CD14-positive monocyte (primary cell): ENCODE measurements at regions of chr12 and their contacts with region 1.

Region 1: DNA sequence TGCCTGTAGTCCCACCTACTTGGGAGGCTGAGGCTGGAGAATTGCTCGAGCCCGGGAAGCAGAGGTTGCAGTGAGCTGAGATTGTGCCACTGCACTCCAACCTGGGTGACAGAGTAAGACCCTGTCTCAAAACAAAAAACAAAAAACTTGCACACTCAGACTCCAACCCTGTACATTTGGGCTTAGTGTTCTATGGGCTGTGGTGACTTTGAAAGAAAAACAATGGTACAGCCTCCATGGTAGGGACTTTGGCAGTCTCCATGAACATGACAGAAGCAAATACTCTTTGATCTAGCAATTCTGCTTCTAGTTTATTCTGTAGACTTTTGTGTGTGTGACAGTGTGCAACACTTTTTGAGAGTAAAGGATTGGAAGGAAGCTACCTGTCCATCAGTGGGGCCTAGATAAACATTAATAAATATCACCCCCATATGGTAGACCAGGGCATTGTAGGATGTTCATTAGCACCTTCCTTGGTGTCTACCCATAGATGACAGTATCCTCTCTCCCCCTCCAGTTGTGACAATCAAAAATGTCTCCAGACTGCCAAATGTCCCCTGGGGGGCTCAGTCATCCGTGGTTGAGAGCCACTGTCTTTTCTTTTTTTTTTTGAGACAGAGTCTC is 10.7 kb downstream of the SNRNP35 start:
- DNase-seq: peak in 2 of 3 donors; percentile 38 to 50
- H3K4me3 ChIP-seq: no peak overlapping the region
- H3K4me3 Mint-ChIP-seq: no peak overlapping the region
- H3K27ac ChIP-seq: no peak overlapping the region
- H3K27ac Mint-ChIP-seq: peak overlapping the region in 2 of 7 donors; percentile 25 to 45
- H3K4me1 ChIP-seq: no peaks in the 10 kb centered on the region
- H3K4me1 Mint-ChIP-seq: no peaks in the 10 kb centered on the region
- H3K27me3 ChIP-seq: no peaks in the 10 kb centered on the region
- H3K27me3 Mint-ChIP-seq: no peaks in the 10 kb centered on the region
- CTCF ChIP-seq: peak; percentile 45

Region 2: GRCh38 chr12:123410041-123410412 is 58.6 kb before region 1 on chr12:
- intact Hi-C with region 1: loop called in 1 of 2 experiments (anchors 10 kb)
- DNase-seq: no peak
- H3K4me3 ChIP-seq: no peak overlapping the region
- H3K4me3 Mint-ChIP-seq: no peak overlapping the region
- H3K27ac ChIP-seq: peak overlapping the region in 1 of 2 donors; percentile 6
- H3K27ac Mint-ChIP-seq: peak overlapping the region in 2 of 7 donors; percentile 40 to 46
- H3K4me1 ChIP-seq: peaks cover 0 to 11% of the 10 kb centered on the region in 2 donors
- H3K4me1 Mint-ChIP-seq: no peaks in the 10 kb centered on the region
- H3K27me3 ChIP-seq: no peaks in the 10 kb centered on the region
- H3K27me3 Mint-ChIP-seq: peaks cover 0 to 2% (median 1%) of the 10 kb centered on the region in 3 donors
- CTCF ChIP-seq: no peak

Region 3: GRCh38 chr12:123436017-123436964 is 32.4 kb before region 1 on chr12 and contains the start of gene RILPL2:
- intact Hi-C with region 1: loop called (anchors 5 kb)
- DNase-seq: peak; percentile 96 to 99 (median 98)
- H3K4me3 ChIP-seq: peak within 1 kb of the TSS; percentile 72 to 98 (median 93)
- H3K4me3 Mint-ChIP-seq: peak within 1 kb of the TSS; percentile 98 to 99
- H3K27ac ChIP-seq: peak within 1 kb of the TSS; percentile 96 to 97
- H3K27ac Mint-ChIP-seq: peak within 1 kb of the TSS; percentile 98 to 100 (median 99)
- H3K4me1 ChIP-seq: peaks cover 52 to 55% of the 10 kb centered on the region in 2 donors
- H3K4me1 Mint-ChIP-seq: peaks cover 56% of the 10 kb centered on the region
- H3K27me3 ChIP-seq: no peaks in the 10 kb centered on the region
- H3K27me3 Mint-ChIP-seq: no peaks in the 10 kb centered on the region
- CTCF ChIP-seq: no peak
- polyA plus RNA-seq, gene RILPL2: 19.3 to 25.1 (median 21.0) TPM